ENCODE measurements at regions of chr11 and their contacts with region 1.

Region 1: DNA sequence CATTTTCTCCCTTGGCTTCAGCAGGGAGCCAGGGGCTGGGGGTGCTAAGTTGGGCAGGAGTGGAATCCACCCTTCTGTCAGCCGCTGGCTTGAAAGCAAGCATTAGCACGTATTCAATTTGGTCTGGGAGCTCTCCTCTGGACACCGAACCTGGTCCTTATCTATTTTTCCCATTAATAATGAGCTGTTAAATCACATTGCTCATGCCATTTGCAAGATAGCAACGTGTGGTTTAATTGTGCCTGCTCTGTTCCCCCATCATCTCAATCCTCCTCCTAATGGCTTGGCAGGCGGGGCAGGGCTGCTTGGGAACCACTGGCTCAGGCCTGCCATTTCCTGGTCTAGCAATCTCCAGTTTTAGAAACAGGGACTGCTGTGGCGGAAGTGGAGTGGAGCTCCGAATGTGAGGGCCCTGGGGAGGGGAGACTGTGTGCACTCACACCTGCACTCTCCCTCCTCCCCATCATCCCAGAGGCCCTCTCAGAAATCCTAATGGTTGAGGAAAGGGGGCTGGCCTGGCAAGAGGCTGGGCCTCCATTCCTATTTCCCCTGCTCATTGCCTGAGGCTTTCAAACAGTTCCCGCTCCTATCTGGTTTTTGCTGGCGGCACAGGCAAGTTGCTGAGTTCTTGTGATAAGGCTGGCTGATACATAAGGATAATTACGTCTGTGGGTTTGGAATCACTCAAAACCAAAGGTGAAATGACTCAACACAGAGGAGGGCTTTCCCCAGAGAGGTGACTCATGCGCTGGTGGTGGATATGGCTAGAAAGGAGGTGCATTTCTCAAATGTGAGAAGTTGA is 201.2 kb upstream of the E2F8 start:
- DNase-seq: peak; percentile 91 to 100
- H3K4me3 ChIP-seq: peak overlapping the region; percentile 5; the same call in 1 of the 2 replicates
- H3K27ac ChIP-seq: peak overlapping the region; percentile 89
- H3K4me1 ChIP-seq: peaks cover 92% of the 10 kb centered on the region
- H3K27me3 ChIP-seq: no peaks in the 10 kb centered on the region
- CTCF ChIP-seq: no peak

Region 2: GRCh38 chr11:19027829-19028595 is 413.9 kb before region 1 on chr11:
- CTCF ChIA-PET with region 1: no interaction called
- POLR2A ChIA-PET with region 1: no interaction called
- intact Hi-C with region 1: loop called (anchors 1 kb)
- DNase-seq: peak; percentile 60 to 94
- H3K4me3 ChIP-seq: no peak overlapping the region
- H3K27ac ChIP-seq: peak overlapping the region; percentile 71
- H3K4me1 ChIP-seq: peaks cover 20% of the 10 kb centered on the region
- H3K27me3 ChIP-seq: peaks cover 47% of the 10 kb centered on the region
- CTCF ChIP-seq: no peak

Region 3: GRCh38 chr11:19240420-19241259 is 201.3 kb before region 1 on chr11 and contains the start of gene E2F8:
- CTCF ChIA-PET with region 1: no interaction called
- POLR2A ChIA-PET with region 1: no interaction called
- intact Hi-C with region 1: loop called (anchors 1 kb)
- DNase-seq: peak; percentile 94 to 99
- H3K4me3 ChIP-seq: peak within 1 kb of the TSS; percentile 87
- H3K27ac ChIP-seq: peak within 1 kb of the TSS; percentile 70
- H3K4me1 ChIP-seq: peaks cover 57% of the 10 kb centered on the region
- H3K27me3 ChIP-seq: no peaks in the 10 kb centered on the region
- CTCF ChIP-seq: no peak
- total RNA-seq, gene E2F8: 22.0 and 26.7 TPM in 2 replicates

Region 4: GRCh38 chr11:19276859-19277808 is 164.8 kb before region 1 on chr11:
- CTCF ChIA-PET with region 1: no interaction called
- POLR2A ChIA-PET with region 1: no interaction called
- intact Hi-C with region 1: loop called (anchors 5 kb)
- DNase-seq: peak; percentile 71 to 99
- H3K4me3 ChIP-seq: no peak overlapping the region
- H3K27ac ChIP-seq: peak overlapping the region; percentile 96
- H3K4me1 ChIP-seq: peaks cover 49% of the 10 kb centered on the region
- H3K27me3 ChIP-seq: no peaks in the 10 kb centered on the region
- CTCF ChIP-seq: no peak

Region 5: GRCh38 chr11:19336331-19336730 is 105.6 kb before region 1 on chr11:
- CTCF ChIA-PET with region 1: no interaction called
- POLR2A ChIA-PET with region 1: no interaction called
- intact Hi-C with region 1: no loop called
- DNase-seq: no peak
- H3K4me3 ChIP-seq: no peak overlapping the region
- H3K27ac ChIP-seq: no peak overlapping the region
- H3K4me1 ChIP-seq: no peaks in the 10 kb centered on the region
- H3K27me3 ChIP-seq: no peaks in the 10 kb centered on the region
- CTCF ChIP-seq: no peak

Region 6: GRCh38 chr11:19370100-19370861 is 71.7 kb before region 1 on chr11:
- CTCF ChIA-PET with region 1: no interaction called
- POLR2A ChIA-PET with region 1: no interaction called
- intact Hi-C with region 1: loop called (anchors 1 kb)
- DNase-seq: peak; percentile 56 to 100
- H3K4me3 ChIP-seq: no peak overlapping the region
- H3K27ac ChIP-seq: peak overlapping the region; percentile 81
- H3K4me1 ChIP-seq: peaks cover 82% of the 10 kb centered on the region
- H3K27me3 ChIP-seq: no peaks in the 10 kb centered on the region
- CTCF ChIP-seq: no peak